Left cardiac atrium (tissue), 4 donors: ENCODE measurements at regions of chr12 and their contacts with region 1.

Region 1: DNA sequence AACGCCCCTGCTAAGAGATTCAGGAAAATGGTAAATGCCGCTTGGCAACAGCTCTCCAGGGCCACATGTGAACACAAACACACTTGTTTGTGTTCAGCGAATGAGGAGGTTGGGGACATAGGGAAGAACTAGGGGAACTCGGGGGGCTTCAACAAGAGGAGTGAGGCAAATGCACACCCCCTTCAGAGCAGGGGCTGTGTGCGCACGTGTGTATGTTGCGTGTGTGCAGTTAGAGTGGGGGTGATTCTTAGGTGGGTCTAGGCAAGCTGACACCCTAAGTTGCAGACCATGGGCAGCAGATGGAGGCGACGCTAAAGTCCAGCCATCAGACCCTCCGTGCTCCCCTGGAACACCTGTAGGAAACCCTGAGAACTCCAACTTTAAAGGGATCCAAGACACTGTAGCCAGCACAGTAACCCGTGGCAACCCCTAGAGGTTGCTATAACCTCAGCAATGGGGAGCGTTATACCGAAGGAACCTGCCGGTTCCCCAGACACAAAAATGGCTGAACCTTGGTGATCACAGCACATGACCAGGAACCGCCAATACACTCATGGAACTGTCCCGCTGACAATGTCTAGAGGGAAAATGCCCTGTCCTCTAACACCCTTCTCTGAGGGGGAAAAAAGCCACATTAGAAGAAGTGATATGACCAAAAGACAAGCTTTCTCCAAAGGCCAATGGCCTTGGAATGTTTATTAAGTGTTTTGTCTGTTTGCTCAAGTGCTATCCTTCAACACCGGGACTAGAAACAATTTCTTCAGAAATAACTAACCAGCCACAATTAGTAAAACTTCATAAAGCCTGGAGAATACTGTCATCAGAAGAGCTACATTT is 86.5 kb upstream of the CEP83 start:
- DNase-seq: peak; percentile 51
- ATAC-seq: peak; percentile 94 to 95

Region 2: DNA sequence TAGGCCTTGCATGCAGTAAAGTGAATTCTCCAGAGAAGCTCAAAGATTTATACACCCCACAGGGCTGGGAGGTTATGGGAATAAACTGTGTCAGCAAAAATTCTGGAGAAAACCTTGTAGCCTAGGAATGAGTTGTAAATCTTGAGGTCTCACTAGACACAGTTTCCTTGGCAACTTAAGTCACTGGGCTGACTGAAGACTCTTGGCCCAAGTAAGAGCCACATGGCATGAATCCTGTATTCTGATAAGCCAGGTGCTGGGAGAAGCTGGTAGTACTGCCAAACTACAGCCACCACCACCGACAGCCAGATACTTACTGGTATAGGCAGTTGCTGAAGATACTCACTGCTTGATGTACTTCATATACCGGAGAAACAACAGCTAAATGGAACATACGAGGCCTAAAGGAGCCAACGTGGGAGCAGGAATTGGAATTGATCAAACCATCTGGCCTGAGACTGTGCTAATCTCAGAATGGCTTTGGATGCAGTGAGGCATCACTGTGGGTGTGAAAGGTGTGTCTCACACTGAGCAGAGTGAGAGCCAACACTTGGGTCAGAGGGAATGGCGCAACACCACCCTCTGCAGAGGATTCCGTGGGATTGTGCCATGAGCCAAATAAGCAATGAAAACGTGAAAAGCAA is 207.0 kb after region 1 on chr12:
- intact Hi-C with region 1: loop called in 1 of 2 experiments (anchors 10 kb)
- DNase-seq: peak; percentile 54
- ATAC-seq: peak; percentile 71 to 99

Region 3: GRCh38 chr12:94762259-94762942 is 216.2 kb after region 1 on chr12:
- intact Hi-C with region 1: loop called (anchors 5 to 10 kb)
- DNase-seq: no peak
- ATAC-seq: no peak

Region 4: GRCh38 chr12:94980577-94980976 is 434.4 kb after region 1 on chr12:
- intact Hi-C with region 1: loop called in 1 of 2 experiments (anchors 10 kb)
- DNase-seq: no peak
- ATAC-seq: no peak